ENCODE measurements at regions of chrX and their contacts with region 1.

Region 1: GRCh38 chrX:19747652-19748610 is 139.5 kb downstream of the SH3KBP1 start:
- DNase-seq: peak; percentile 85
- H3K4me3 Mint-ChIP-seq: peak overlapping the region; percentile 64
- H3K27ac Mint-ChIP-seq: peak overlapping the region; percentile 97
- H3K4me1 Mint-ChIP-seq: peaks cover 91% of the 10 kb centered on the region
- H3K27me3 Mint-ChIP-seq: no peaks in the 10 kb centered on the region

Region 2: DNA sequence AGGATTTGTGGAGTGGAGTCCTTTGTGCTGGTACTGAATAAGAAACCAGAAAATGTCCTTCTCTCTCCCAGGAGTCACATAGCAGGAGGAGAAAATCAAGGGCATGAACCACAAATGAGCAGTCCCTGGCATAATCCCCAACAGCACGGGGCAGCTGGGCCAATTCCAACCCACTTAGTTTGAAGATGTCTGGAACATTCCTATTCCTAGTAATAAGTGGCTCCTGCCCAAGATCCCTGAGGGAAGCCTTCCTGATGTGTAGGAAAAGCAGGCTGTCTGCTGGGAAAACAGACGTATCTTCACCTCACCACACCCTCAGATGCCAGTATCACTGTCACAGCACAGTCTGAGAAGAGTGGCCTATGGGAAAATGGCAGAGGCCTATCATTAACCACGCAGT is 49.8 kb before region 1 on chrX:
- CTCF ChIA-PET with region 1: no interaction called
- POLR2A ChIA-PET with region 1: no interaction called
- intact Hi-C with region 1: no loop called
- DNase-seq: no peak
- H3K4me3 Mint-ChIP-seq: no peak overlapping the region
- H3K27ac Mint-ChIP-seq: no peak overlapping the region
- H3K4me1 Mint-ChIP-seq: peaks cover 45% of the 10 kb centered on the region
- H3K27me3 Mint-ChIP-seq: no peaks in the 10 kb centered on the region

Region 3: DNA sequence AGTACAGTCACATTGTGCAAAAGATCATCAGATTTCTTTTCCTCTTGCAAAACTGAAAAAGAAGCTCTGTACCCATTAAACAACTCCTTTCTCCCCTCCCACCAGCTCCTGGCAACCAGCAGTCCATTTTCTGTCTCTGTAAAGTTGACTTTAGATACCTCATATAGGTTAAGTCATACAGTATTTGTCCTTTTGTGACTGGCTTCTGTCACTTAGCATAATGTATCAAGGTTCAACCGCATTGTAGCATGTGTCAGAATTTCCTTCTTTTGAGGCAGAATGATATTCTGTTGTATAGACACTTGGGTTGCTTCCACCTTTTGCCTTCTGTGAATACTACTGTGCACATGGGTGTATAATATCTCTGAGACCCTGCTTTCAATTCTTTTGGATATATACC is 17.7 kb after region 1 on chrX:
- CTCF ChIA-PET with region 1: interaction called, 4 read pairs
- POLR2A ChIA-PET with region 1: interaction called, 3 read pairs
- intact Hi-C with region 1: loop called (anchors 1 kb)
- DNase-seq: peak; percentile 41
- H3K4me3 Mint-ChIP-seq: peak overlapping the region; percentile 12
- H3K27ac Mint-ChIP-seq: peak overlapping the region; percentile 71
- H3K4me1 Mint-ChIP-seq: peaks cover 79% of the 10 kb centered on the region
- H3K27me3 Mint-ChIP-seq: no peaks in the 10 kb centered on the region

Region 4: GRCh38 chrX:19840899-19841648 is 93.1 kb after region 1 on chrX:
- CTCF ChIA-PET with region 1: interaction called, 3 read pairs
- POLR2A ChIA-PET with region 1: interaction called, 5 read pairs
- intact Hi-C with region 1: loop called (anchors 5 kb)
- DNase-seq: peak; percentile 63
- H3K4me3 Mint-ChIP-seq: peak overlapping the region; percentile 60
- H3K27ac Mint-ChIP-seq: peak overlapping the region; percentile 98
- H3K4me1 Mint-ChIP-seq: peaks cover 67% of the 10 kb centered on the region
- H3K27me3 Mint-ChIP-seq: no peaks in the 10 kb centered on the region